Activated CD8-positive, alpha-beta T cell treated with anti-CD3 and anti-CD28 coated beads, Interleukin-2, amount 10 ng/mL, durations not matched to agents 7 days and 5 days (primary cell): ENCODE measurements at regions of chr7 and their contacts with region 1.

Region 1: DNA sequence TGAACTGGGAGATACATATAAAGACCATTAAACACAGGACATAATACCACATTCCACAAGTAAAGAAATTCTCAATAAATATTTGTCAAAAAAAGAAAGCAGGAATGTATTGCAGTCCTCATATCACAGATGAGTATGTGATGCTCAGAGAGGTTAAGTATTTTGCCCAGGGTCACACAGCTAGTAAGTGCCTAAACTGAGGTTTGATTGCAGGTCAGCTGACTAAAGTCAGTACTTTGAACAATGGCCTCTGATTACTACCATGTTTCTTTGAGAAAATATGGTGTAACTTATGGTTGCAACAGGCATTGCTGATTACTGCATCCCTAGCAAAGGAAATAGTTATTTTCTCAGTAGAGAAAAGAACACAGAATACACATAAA is 267.1 kb downstream of the ELMO1 start:
- DNase-seq: no peak
- ATAC-seq: peak; percentile 13
- H3K4me3 Mint-ChIP-seq: no peak overlapping the region
- H3K27ac Mint-ChIP-seq: no peak overlapping the region
- H3K4me1 Mint-ChIP-seq: peaks cover 11% of the 10 kb centered on the region
- H3K27me3 Mint-ChIP-seq: no peaks in the 10 kb centered on the region

Region 2: DNA sequence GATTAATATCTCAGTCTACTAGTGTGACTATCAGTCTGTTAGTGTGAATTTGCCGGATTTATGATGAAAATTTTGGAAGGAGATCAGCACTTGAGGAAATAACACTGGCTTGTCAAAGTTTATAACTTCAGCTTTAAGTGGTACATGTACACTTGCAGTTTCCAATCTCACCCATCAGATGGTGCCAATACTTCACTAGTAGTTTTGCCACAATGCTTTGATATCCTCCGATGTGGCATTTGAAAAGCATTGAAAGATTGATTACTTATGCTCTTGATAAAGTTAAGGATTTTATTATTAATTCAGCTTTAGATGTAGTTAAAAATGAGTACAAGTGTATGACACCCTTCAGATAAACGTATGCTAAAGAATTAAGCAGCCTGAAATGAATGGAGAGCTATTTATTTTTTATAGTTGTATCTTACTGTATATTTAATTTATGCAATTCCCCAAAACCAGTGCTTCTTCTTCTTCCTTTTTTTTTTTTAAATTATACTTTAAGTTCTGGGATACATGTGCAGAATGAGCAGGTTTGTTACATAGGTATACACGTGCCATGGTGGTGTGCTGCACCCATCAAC is 693.7 kb before region 1 on chr7:
- CTCF ChIA-PET with region 1: interaction called, 80 read pairs
- POLR2A ChIA-PET with region 1: no interaction called
- DNase-seq: peak; percentile 68
- ATAC-seq: peak; percentile 70
- H3K4me3 Mint-ChIP-seq: no peak overlapping the region
- H3K27ac Mint-ChIP-seq: no peak overlapping the region
- H3K4me1 Mint-ChIP-seq: peaks cover 3% of the 10 kb centered on the region
- H3K27me3 Mint-ChIP-seq: peaks cover 8% of the 10 kb centered on the region

Region 3: GRCh38 chr7:36677769-36678437 is 503.6 kb before region 1 on chr7:
- CTCF ChIA-PET with region 1: interaction called, 45 read pairs
- POLR2A ChIA-PET with region 1: no interaction called
- DNase-seq: peak; percentile 45
- ATAC-seq: peak; percentile 52
- H3K4me3 Mint-ChIP-seq: peak overlapping the region; percentile 51
- H3K27ac Mint-ChIP-seq: peak overlapping the region; percentile 89
- H3K4me1 Mint-ChIP-seq: peaks cover 53% of the 10 kb centered on the region
- H3K27me3 Mint-ChIP-seq: no peaks in the 10 kb centered on the region

Region 4: GRCh38 chr7:36787933-36788378 is 393.6 kb before region 1 on chr7:
- CTCF ChIA-PET with region 1: interaction called, 11 read pairs
- POLR2A ChIA-PET with region 1: no interaction called
- DNase-seq: peak; percentile 38
- ATAC-seq: peak; percentile 57
- H3K4me3 Mint-ChIP-seq: peak overlapping the region; percentile 1
- H3K27ac Mint-ChIP-seq: peak overlapping the region; percentile 82
- H3K4me1 Mint-ChIP-seq: peaks cover 89% of the 10 kb centered on the region
- H3K27me3 Mint-ChIP-seq: no peaks in the 10 kb centered on the region

Region 5: GRCh38 chr7:36986429-36987362 is 194.8 kb before region 1 on chr7:
- CTCF ChIA-PET with region 1: interaction called, 20 read pairs
- POLR2A ChIA-PET with region 1: no interaction called
- DNase-seq: peak; percentile 70
- ATAC-seq: no peak
- H3K4me3 Mint-ChIP-seq: no peak overlapping the region
- H3K27ac Mint-ChIP-seq: no peak overlapping the region
- H3K4me1 Mint-ChIP-seq: peaks cover 26% of the 10 kb centered on the region
- H3K27me3 Mint-ChIP-seq: no peaks in the 10 kb centered on the region